GM23248 (cell line): ENCODE measurements at regions of chr2 and their contacts with region 1.

Region 1: DNA sequence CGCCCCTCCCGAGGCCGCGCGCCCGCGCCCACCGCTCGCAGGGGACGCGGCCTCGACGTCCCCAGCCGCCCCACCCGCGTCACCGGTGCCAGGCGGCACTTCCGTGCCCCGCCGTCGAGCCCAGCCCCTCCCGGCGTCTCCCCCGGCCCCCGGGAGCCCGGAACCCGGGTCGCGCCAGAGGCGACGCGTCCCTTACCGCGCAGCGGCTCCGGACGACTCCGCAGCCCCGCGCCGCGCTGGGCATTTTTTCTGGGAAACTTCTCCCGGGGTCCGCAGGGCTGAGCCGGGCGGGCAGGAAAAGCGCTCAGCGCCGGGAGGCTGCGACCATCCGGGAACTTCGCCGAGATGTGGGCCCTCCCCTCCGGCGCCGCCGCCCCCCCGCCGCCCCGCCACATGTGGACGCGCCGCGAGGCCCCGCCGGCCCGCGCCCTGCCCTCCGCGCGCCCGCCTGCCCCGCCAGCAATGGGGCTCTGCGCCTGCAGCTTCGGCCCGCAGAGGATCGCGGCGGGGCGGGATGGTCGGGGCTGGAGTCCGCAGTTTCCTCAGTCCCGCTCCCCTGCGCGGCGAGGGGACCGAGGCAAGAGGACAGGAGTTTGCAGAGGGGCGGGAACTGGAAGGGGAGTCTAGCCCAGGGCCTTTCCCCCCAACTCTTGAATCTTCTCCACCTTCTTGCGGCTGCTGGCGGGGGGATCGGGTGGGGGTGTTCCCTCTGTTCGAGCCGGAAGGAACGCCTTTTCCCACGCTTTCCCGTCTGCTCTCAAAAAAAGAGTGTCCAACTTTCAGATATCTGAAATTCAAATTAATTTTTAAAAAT is 81.5 kb downstream of the CHRNA1 start:
- DNase-seq: peak; percentile 88
- H3K4me3 ChIP-seq: peak overlapping the region; percentile 95
- H3K27ac ChIP-seq: peak overlapping the region; percentile 81
- H3K4me1 ChIP-seq: peaks cover 48% of the 10 kb centered on the region
- H3K27me3 ChIP-seq: no peaks in the 10 kb centered on the region

Region 2: GRCh38 chr2:174344716-174345461 is 337.9 kb before region 1 on chr2:
- in situ Hi-C with region 1: no loop called
- DNase-seq: peak; percentile 73
- H3K4me3 ChIP-seq: no peak overlapping the region
- H3K27ac ChIP-seq: no peak overlapping the region
- H3K4me1 ChIP-seq: no peaks in the 10 kb centered on the region
- H3K27me3 ChIP-seq: peaks cover 10% of the 10 kb centered on the region

Region 3: DNA sequence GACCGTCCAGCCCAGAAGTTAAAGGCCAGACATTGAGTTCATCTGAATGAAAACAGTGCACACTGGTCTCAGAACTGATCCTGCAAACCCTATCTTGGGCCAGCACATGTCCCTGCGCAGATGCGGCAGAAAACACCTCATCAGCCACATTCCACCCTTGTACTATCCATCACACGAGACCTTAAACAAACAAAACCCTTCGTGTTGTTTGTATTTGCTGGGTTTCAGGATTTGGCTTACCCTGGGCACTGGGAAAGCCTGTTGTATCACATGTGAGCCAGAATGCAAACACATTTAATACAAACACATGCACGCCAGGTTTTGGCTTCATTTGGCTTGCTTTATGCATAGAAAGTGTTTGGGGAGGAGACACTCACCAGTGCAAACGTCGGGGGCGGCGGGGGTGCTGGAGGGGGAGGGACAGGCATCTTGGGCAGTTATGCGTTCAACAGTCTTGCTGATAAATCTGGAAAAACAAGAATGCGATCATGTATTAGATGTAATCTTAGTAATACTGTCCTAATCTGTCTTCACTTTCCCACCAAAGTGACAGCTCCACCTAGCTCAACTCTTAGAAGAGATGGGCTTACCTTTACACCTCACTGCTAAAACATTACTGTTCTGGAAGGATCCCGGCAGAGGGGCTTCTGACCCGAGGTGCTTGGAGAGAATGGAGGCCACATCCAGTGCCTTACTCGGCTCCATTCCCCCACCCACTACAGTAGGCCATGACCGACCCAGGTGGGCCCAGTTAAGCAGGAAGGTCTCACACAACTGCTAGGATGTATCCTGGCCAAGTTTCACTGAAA is 97.4 kb before region 1 on chr2:
- in situ Hi-C with region 1: loop called (anchors 10 kb)
- DNase-seq: no peak
- H3K4me3 ChIP-seq: no peak overlapping the region
- H3K27ac ChIP-seq: no peak overlapping the region
- H3K4me1 ChIP-seq: peaks cover 23% of the 10 kb centered on the region
- H3K27me3 ChIP-seq: no peaks in the 10 kb centered on the region

Region 4: GRCh38 chr2:174951745-174952144 is 269.0 kb after region 1 on chr2:
- in situ Hi-C with region 1: no loop called
- DNase-seq: peak; percentile 31
- H3K4me3 ChIP-seq: no peak overlapping the region
- H3K27ac ChIP-seq: no peak overlapping the region
- H3K4me1 ChIP-seq: peaks cover 11% of the 10 kb centered on the region
- H3K27me3 ChIP-seq: no peaks in the 10 kb centered on the region